PC-9 (cell line): ENCODE measurements at regions of chr2 and their contacts with region 1.

Region 1: DNA sequence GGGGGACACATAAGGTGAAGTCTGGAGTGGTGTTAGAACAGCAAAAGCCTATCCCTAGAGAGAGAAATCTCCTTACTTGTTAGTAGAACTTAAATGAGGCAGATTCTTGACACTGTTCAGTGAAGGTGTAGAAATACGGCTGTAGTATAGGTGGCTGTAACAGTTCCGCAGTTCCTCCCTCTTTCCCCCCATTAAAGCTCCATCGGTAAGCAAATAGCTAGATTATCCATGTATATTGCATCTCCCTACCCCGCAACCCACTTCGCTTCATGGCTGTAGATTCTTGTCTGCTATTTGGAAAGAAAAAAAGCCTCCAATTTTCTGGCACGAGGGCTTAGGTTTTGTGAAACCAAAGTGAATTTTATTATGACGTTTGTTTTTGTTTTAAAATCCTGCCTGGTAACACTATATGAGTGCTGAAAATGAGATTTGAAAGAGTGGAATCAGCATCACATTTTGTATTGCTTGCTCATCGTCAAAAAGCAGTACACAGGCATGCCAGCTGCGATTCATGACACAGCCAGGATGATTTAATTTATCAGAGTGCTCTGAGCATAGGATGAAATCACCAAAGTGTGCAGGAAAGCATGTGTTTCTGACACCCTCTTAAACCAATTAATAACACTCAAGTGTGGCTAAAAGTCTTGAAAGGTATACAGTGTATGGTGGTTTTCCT is 1.4 kb downstream of the FAM171B start:
- DNase-seq: no peak
- H3K4me3 ChIP-seq: no peak overlapping the region
- H3K27ac ChIP-seq: no peak overlapping the region
- H3K4me1 ChIP-seq: no peaks in the 10 kb centered on the region; the same call in 1 of the 2 replicates
- H3K27me3 ChIP-seq: no peaks in the 10 kb centered on the region
- CTCF ChIP-seq: no peak

Region 2: GRCh38 chr2:186570587-186570986 is 124.6 kb before region 1 on chr2:
- CTCF ChIA-PET with region 1: no interaction called
- POLR2A ChIA-PET with region 1: no interaction called
- intact Hi-C with region 1: no loop called
- DNase-seq: peak; percentile 31 to 85
- H3K4me3 ChIP-seq: no peak overlapping the region
- H3K27ac ChIP-seq: peak overlapping the region; percentile 75
- H3K4me1 ChIP-seq: peaks cover 23% of the 10 kb centered on the region
- H3K27me3 ChIP-seq: no peaks in the 10 kb centered on the region
- CTCF ChIP-seq: no peak

Region 3: GRCh38 chr2:186755066-186755465 is 59.8 kb after region 1 on chr2:
- CTCF ChIA-PET with region 1: no interaction called
- POLR2A ChIA-PET with region 1: no interaction called
- intact Hi-C with region 1: no loop called
- DNase-seq: no peak
- H3K4me3 ChIP-seq: no peak overlapping the region
- H3K27ac ChIP-seq: no peak overlapping the region
- H3K4me1 ChIP-seq: peaks cover 12% of the 10 kb centered on the region
- H3K27me3 ChIP-seq: no peaks in the 10 kb centered on the region
- CTCF ChIP-seq: no peak

Region 4: DNA sequence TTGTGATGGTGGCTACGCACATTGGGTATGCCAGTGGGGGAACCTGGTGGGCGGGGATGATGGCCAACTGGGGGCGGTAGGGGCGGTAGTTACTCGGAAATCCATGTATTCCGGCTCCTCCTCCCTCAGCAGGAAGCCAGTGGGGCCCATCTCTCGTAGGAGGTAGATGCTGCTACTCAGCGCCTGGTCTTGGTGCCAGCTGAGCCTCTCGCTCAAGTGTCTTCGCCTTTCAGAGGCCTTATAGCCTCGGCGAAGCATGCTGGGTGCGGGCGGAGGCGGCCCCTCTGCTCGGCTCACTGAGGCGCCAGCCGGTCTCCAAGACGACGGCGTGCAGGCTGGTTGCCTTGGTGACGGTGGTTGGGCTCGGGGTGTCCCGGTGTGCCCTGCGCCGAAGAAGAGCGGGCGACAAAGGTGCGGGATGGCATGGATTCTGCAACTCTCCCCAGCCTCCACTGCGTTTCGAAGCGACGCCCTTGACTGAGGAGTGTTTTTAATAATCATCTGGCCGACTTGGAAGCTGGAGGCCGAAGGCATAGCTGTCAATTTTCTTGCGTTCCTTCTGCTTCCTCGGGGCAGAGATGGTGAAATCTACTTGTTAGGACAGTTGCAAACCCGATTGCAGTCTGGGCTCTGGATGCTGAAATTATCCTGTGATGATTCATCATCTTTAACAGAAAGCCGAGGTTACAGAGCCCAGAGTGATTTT is 153.8 kb after region 1 on chr2 and contains the start of gene ZSWIM2:
- CTCF ChIA-PET with region 1: no interaction called
- POLR2A ChIA-PET with region 1: no interaction called
- intact Hi-C with region 1: loop called (anchors 10 kb)
- DNase-seq: peak in 1 of 2 experiments; percentile 43
- H3K4me3 ChIP-seq: no peak within 1 kb of the TSS
- H3K27ac ChIP-seq: no peak within 1 kb of the TSS
- H3K4me1 ChIP-seq: no peaks in the 10 kb centered on the region
- H3K27me3 ChIP-seq: no peaks in the 10 kb centered on the region
- CTCF ChIP-seq: no peak
- total RNA-seq, gene ZSWIM2: not detected in 2 replicates